ENCODE measurements at regions of chr3 and their contacts with region 1.

Region 1: GRCh38 chr3:141311496-141312353 is 56.6 kb upstream of the ZBTB38 start:
- DNase-seq: peak; percentile 97 to 99 (median 98)
- H3K4me3 ChIP-seq: peak overlapping the region; percentile 68 to 73
- H3K4me3 Mint-ChIP-seq: peak overlapping the region; percentile 92 to 100 (median 98)
- H3K27ac ChIP-seq: peak overlapping the region; percentile 66
- H3K27ac Mint-ChIP-seq: peak overlapping the region; percentile 89 to 99 (median 97)
- H3K4me1 ChIP-seq: peaks cover 46% of the 10 kb centered on the region
- H3K4me1 Mint-ChIP-seq: peaks cover 32 to 60% (median 49%) of the 10 kb centered on the region in 4 donors
- H3K27me3 ChIP-seq: no peaks in the 10 kb centered on the region
- H3K27me3 Mint-ChIP-seq: no peaks in the 10 kb centered on the region

Region 2: DNA sequence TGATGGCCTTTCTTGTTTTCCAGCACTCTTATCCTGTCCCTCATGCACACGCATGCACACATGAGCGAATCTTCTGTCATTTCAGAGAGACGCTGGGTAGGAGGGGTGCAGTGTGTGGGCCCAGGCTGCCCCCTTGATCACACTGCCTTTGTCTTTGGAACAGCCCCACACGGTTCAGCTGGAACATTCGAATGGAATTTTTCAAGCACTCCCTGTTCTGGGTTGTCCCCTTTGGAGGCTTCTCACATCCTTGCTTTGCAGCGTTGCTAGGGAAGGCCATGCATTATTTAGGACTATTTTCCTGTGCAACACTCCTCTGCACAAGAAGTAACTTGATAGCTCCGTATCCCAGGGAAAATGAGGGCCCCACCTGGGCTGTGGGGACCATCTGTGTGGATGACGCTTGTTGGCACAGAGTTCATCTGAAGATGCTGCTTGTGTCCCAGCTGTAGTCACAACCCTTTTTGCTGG is 182.1 kb before region 1 on chr3:
- CTCF ChIA-PET with region 1: no interaction called
- POLR2A ChIA-PET with region 1: no interaction called
- intact Hi-C with region 1: no loop called
- DNase-seq: no peak
- H3K4me3 ChIP-seq: no peak overlapping the region
- H3K4me3 Mint-ChIP-seq: no peak overlapping the region
- H3K27ac ChIP-seq: no peak overlapping the region
- H3K27ac Mint-ChIP-seq: no peak overlapping the region
- H3K4me1 ChIP-seq: no peaks in the 10 kb centered on the region
- H3K4me1 Mint-ChIP-seq: peaks cover 0 to 1% (median 0%) of the 10 kb centered on the region in 4 donors
- H3K27me3 ChIP-seq: no peaks in the 10 kb centered on the region
- H3K27me3 Mint-ChIP-seq: peaks cover 4 to 14% of the 10 kb centered on the region in 2 donors

Region 3: GRCh38 chr3:141266797-141267555 is 44.7 kb before region 1 on chr3:
- CTCF ChIA-PET with region 1: interaction called, 19 read pairs
- POLR2A ChIA-PET with region 1: interaction called, 26 read pairs
- intact Hi-C with region 1: no loop called
- DNase-seq: peak; percentile 51 to 68 (median 58)
- H3K4me3 ChIP-seq: peak overlapping the region; percentile 54 to 66
- H3K4me3 Mint-ChIP-seq: peak overlapping the region; percentile 88 to 99 (median 92)
- H3K27ac ChIP-seq: peak overlapping the region; percentile 73
- H3K27ac Mint-ChIP-seq: peak overlapping the region; percentile 85 to 98 (median 96)
- H3K4me1 ChIP-seq: peaks cover 27% of the 10 kb centered on the region
- H3K4me1 Mint-ChIP-seq: peaks cover 17 to 57% (median 29%) of the 10 kb centered on the region in 4 donors
- H3K27me3 ChIP-seq: no peaks in the 10 kb centered on the region
- H3K27me3 Mint-ChIP-seq: no peaks in the 10 kb centered on the region

Region 4: GRCh38 chr3:141360888-141361598 is 49.3 kb after region 1 on chr3:
- CTCF ChIA-PET with region 1: interaction called, 68 read pairs
- POLR2A ChIA-PET with region 1: interaction called, 14 read pairs
- intact Hi-C with region 1: loop called (anchors 2 kb)
- DNase-seq: peak in 4 of 5 donors; percentile 46 to 60 (median 50)
- H3K4me3 ChIP-seq: no peak overlapping the region
- H3K4me3 Mint-ChIP-seq: peak overlapping the region in 6 of 8 donors; percentile 11 to 69 (median 50)
- H3K27ac ChIP-seq: no peak overlapping the region
- H3K27ac Mint-ChIP-seq: peak overlapping the region in 2 of 7 donors; percentile 7 to 39
- H3K4me1 ChIP-seq: peaks cover 10% of the 10 kb centered on the region
- H3K4me1 Mint-ChIP-seq: peaks cover 3 to 8% (median 7%) of the 10 kb centered on the region in 4 donors
- H3K27me3 ChIP-seq: no peaks in the 10 kb centered on the region
- H3K27me3 Mint-ChIP-seq: peaks cover 2 to 5% of the 10 kb centered on the region in 2 donors

Region 5: GRCh38 chr3:141370065-141370533 is 58.4 kb after region 1 on chr3:
- CTCF ChIA-PET with region 1: interaction called, 22 read pairs
- POLR2A ChIA-PET with region 1: interaction called, 9 read pairs
- intact Hi-C with region 1: loop called (anchors 1 kb)
- DNase-seq: peak; percentile 82 to 88 (median 84)
- H3K4me3 ChIP-seq: no peak overlapping the region
- H3K4me3 Mint-ChIP-seq: no peak overlapping the region
- H3K27ac ChIP-seq: no peak overlapping the region
- H3K27ac Mint-ChIP-seq: peak overlapping the region in 6 of 7 donors; percentile 30 to 90 (median 58)
- H3K4me1 ChIP-seq: no peaks in the 10 kb centered on the region
- H3K4me1 Mint-ChIP-seq: peaks cover 5 to 11% (median 8%) of the 10 kb centered on the region in 4 donors
- H3K27me3 ChIP-seq: no peaks in the 10 kb centered on the region
- H3K27me3 Mint-ChIP-seq: no peaks in the 10 kb centered on the region

Region 6: DNA sequence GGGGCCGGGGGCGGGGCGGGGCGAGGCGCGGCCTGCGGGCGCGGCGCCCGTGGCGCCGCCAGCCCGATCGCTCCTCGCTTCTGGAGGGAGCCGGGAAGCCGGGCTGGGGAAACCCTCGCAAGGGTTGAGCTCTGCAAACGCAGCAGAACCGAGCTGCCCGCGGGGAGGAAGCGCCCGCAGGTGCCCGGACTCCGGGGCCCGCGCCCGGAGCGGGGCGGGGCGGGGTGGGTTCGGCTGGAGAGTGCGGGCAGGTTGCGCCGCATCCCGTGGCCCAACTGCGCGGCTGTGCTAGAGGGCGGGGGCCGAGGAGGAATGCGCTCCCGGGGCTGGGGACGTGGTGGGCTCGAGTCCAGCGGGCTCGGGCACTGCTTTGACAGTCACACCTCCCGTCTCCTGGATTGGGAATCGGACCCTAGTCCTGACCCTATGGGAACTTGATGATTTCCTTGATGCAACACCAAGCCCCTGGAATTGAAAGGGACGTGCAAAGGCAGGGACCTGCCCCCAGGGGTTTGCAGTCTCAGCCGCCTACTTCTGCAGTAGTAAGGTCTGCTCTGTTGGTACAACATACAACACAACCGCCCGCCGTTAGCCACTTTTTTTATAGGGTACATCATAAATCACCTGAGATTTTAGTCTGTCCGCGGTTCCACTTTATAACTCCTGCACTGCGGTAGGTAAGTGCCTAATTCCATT is 90.9 kb after region 1 on chr3:
- CTCF ChIA-PET with region 1: interaction called, 9 read pairs
- POLR2A ChIA-PET with region 1: interaction called, 31 read pairs
- intact Hi-C with region 1: loop called (anchors 1 kb)
- DNase-seq: peak; percentile 47 to 64 (median 52)
- H3K4me3 ChIP-seq: peak overlapping the region; percentile 55 to 79
- H3K4me3 Mint-ChIP-seq: peak overlapping the region; percentile 89 to 96 (median 95)
- H3K27ac ChIP-seq: peak overlapping the region; percentile 85
- H3K27ac Mint-ChIP-seq: peak overlapping the region; percentile 90 to 97 (median 95)
- H3K4me1 ChIP-seq: peaks cover 73% of the 10 kb centered on the region
- H3K4me1 Mint-ChIP-seq: peaks cover 46 to 75% (median 60%) of the 10 kb centered on the region in 4 donors
- H3K27me3 ChIP-seq: no peaks in the 10 kb centered on the region
- H3K27me3 Mint-ChIP-seq: no peaks in the 10 kb centered on the region

Region 7: DNA sequence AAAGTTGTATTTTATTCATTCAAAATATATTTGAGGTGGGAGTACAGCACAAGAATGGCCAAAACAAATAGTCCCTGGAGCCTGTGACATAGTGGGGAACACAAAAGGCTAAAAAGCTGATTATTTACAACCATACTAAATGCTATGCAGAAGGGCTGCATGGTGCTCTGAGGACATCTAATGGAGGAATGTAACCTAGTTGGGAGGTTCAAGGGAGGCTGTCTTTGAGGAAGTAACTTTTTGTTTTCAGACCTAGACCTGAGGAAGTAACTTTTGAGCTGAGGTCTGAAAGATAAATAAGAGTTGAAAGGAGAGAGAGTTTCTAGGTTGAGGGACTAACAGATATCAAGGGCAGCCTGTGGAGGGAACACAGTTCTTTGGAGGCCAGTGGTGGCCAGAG is 140.3 kb after region 1 on chr3:
- CTCF ChIA-PET with region 1: interaction called, 428 read pairs
- POLR2A ChIA-PET with region 1: interaction called, 26 read pairs
- intact Hi-C with region 1: loop called (anchors 1 kb)
- DNase-seq: peak; percentile 57 to 64 (median 62)
- H3K4me3 ChIP-seq: no peak overlapping the region
- H3K4me3 Mint-ChIP-seq: no peak overlapping the region
- H3K27ac ChIP-seq: no peak overlapping the region
- H3K27ac Mint-ChIP-seq: no peak overlapping the region
- H3K4me1 ChIP-seq: peaks cover 18% of the 10 kb centered on the region
- H3K4me1 Mint-ChIP-seq: peaks cover 7 to 14% (median 10%) of the 10 kb centered on the region in 4 donors
- H3K27me3 ChIP-seq: no peaks in the 10 kb centered on the region
- H3K27me3 Mint-ChIP-seq: no peaks in the 10 kb centered on the region

Region 8: GRCh38 chr3:141561426-141562034 is 249.8 kb after region 1 on chr3:
- CTCF ChIA-PET with region 1: interaction called, 9 read pairs
- POLR2A ChIA-PET with region 1: interaction called, 3 read pairs
- intact Hi-C with region 1: loop called (anchors 2 kb)
- DNase-seq: peak; percentile 55 to 73 (median 70)
- H3K4me3 ChIP-seq: no peak overlapping the region
- H3K4me3 Mint-ChIP-seq: no peak overlapping the region
- H3K27ac ChIP-seq: no peak overlapping the region
- H3K27ac Mint-ChIP-seq: peak overlapping the region in 6 of 7 donors; percentile 35 to 85 (median 78)
- H3K4me1 ChIP-seq: peaks cover 33% of the 10 kb centered on the region
- H3K4me1 Mint-ChIP-seq: peaks cover 15 to 22% (median 20%) of the 10 kb centered on the region in 4 donors
- H3K27me3 ChIP-seq: no peaks in the 10 kb centered on the region
- H3K27me3 Mint-ChIP-seq: no peaks in the 10 kb centered on the region